ENCODE measurements at regions of chr10 and their contacts with region 1.

Region 1: GRCh38 chr10:27241652-27242472 is 1.3 kb upstream of the ACBD5 start:
- DNase-seq: peak; percentile 93
- H3K4me3 ChIP-seq: peak overlapping the region; percentile 58 to 92 (median 68)
- H3K4me3 Mint-ChIP-seq: peak overlapping the region; percentile 95 to 97
- H3K27ac ChIP-seq: peak overlapping the region; percentile 96 to 98
- H3K27ac Mint-ChIP-seq: peak overlapping the region; percentile 96 to 98 (median 98)
- H3K4me1 ChIP-seq: peaks cover 25 to 32% of the 10 kb centered on the region in 2 donors
- H3K4me1 Mint-ChIP-seq: peaks cover 26% of the 10 kb centered on the region
- H3K27me3 ChIP-seq: no peaks in the 10 kb centered on the region
- H3K27me3 Mint-ChIP-seq: peaks cover 0 to 4% (median 2%) of the 10 kb centered on the region in 3 donors
- CTCF ChIP-seq: no peak

Region 2: GRCh38 chr10:26860443-26861204 is 381.2 kb before region 1 on chr10 and contains the start of gene ABI1:
- intact Hi-C with region 1: loop called in 1 of 2 experiments (anchors 5 kb)
- DNase-seq: peak; percentile 97 to 99 (median 99)
- H3K4me3 ChIP-seq: peak within 1 kb of the TSS; percentile 86 to 99 (median 89)
- H3K4me3 Mint-ChIP-seq: peak within 1 kb of the TSS; percentile 97 to 98
- H3K27ac ChIP-seq: peak within 1 kb of the TSS; percentile 95 to 96
- H3K27ac Mint-ChIP-seq: peak within 1 kb of the TSS; percentile 94 to 99 (median 98)
- H3K4me1 ChIP-seq: peaks cover 43 to 60% of the 10 kb centered on the region in 2 donors
- H3K4me1 Mint-ChIP-seq: peaks cover 47% of the 10 kb centered on the region
- H3K27me3 ChIP-seq: no peaks in the 10 kb centered on the region
- H3K27me3 Mint-ChIP-seq: peaks cover 2 to 5% (median 2%) of the 10 kb centered on the region in 3 donors
- CTCF ChIP-seq: no peak
- polyA plus RNA-seq, gene ABI1: 39.8 to 77.2 (median 61.5) TPM

Region 3: DNA sequence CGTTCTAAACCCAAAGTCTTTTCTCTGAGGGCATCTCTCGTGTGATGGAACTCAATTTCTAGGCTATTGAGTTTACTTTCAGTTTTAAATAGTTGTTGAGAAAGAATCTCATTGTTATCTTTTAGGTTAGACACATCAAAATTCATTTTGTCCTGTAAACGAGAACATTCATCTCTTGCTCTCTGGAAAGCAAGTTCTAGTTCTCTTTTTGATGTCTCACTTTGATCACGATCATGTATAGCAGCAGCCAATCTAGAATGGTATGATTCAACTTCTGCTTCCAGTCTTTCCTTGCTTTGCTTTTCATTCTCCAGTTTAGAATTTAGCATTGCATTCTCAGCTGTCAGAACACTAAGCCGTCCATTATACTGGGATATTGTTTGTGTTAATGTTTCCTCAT is 206.7 kb before region 1 on chr10:
- intact Hi-C with region 1: no loop called
- DNase-seq: no peak
- H3K4me3 ChIP-seq: no peak overlapping the region
- H3K4me3 Mint-ChIP-seq: no peak overlapping the region
- H3K27ac ChIP-seq: no peak overlapping the region
- H3K27ac Mint-ChIP-seq: no peak overlapping the region
- H3K4me1 ChIP-seq: no peaks in the 10 kb centered on the region
- H3K4me1 Mint-ChIP-seq: no peaks in the 10 kb centered on the region
- H3K27me3 ChIP-seq: no peaks in the 10 kb centered on the region
- H3K27me3 Mint-ChIP-seq: no peaks in the 10 kb centered on the region
- CTCF ChIP-seq: no peak

Region 4: GRCh38 chr10:27155066-27155754 is 86.7 kb before region 1 on chr10 and contains the start of gene MASTL:
- intact Hi-C with region 1: loop called (anchors 2 kb)
- DNase-seq: peak; percentile 90 to 96 (median 95)
- H3K4me3 ChIP-seq: peak within 1 kb of the TSS; percentile 78 to 89 (median 85)
- H3K4me3 Mint-ChIP-seq: peak within 1 kb of the TSS; percentile 99 to 100
- H3K27ac ChIP-seq: peak within 1 kb of the TSS; percentile 98 to 99
- H3K27ac Mint-ChIP-seq: peak within 1 kb of the TSS; percentile 100
- H3K4me1 ChIP-seq: peaks cover 19 to 27% of the 10 kb centered on the region in 2 donors
- H3K4me1 Mint-ChIP-seq: peaks cover 34% of the 10 kb centered on the region
- H3K27me3 ChIP-seq: no peaks in the 10 kb centered on the region
- H3K27me3 Mint-ChIP-seq: no peaks in the 10 kb centered on the region
- CTCF ChIP-seq: no peak
- polyA plus RNA-seq, gene MASTL: 0.65 to 4.9 (median 2.4) TPM